CD8-positive, alpha-beta T cell (primary cell): ENCODE measurements at regions of chr7 and their contacts with region 1.

Region 1: GRCh38 chr7:94087664-94088352 is 83.7 kb upstream of the BET1 start:
- DNase-seq: peak in 8 of 9 experiments; percentile 10 to 78 (median 38)
- ATAC-seq: peak; percentile 84
- H3K4me3 ChIP-seq: peak overlapping the region; percentile 24 to 27
- H3K4me3 Mint-ChIP-seq: peak overlapping the region; percentile 61
- H3K27ac ChIP-seq: no peak overlapping the region
- H3K27ac Mint-ChIP-seq: peak overlapping the region; percentile 25
- H3K4me1 ChIP-seq: peaks cover 5% of the 10 kb centered on the region
- H3K4me1 Mint-ChIP-seq: peaks cover 5% of the 10 kb centered on the region
- H3K27me3 ChIP-seq: no peaks in the 10 kb centered on the region
- H3K27me3 Mint-ChIP-seq: peaks cover 12% of the 10 kb centered on the region
- CTCF ChIP-seq: peak; percentile 71

Region 2: DNA sequence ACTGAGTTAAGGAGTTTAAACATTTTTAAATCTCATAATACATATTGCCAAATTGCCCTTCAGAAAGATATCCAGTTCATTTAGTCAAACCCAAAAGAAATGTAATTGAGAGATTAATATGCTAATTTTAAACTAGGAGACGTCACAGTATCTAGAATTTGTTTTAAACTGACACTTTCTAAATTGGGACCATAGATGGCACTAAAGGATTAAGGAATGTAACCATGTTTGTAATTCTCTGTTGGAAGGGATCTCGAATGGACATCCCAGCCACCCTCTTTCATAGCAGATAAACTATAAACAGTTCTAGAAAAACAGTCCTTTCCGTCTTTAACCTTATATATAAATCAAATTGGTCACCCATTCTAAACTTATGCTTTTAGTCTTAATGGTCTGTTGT is 909.6 kb before region 1 on chr7:
- CTCF ChIA-PET with region 1: no interaction called
- POLR2A ChIA-PET with region 1: no interaction called
- intact Hi-C with region 1: loop called in 1 of 2 experiments (anchors 10 kb)
- DNase-seq: peak in 2 of 9 experiments; percentile 3 to 15
- ATAC-seq: no peak
- H3K4me3 ChIP-seq: no peak overlapping the region
- H3K4me3 Mint-ChIP-seq: no peak overlapping the region
- H3K27ac ChIP-seq: no peak overlapping the region
- H3K27ac Mint-ChIP-seq: no peak overlapping the region
- H3K4me1 ChIP-seq: no peaks in the 10 kb centered on the region
- H3K4me1 Mint-ChIP-seq: no peaks in the 10 kb centered on the region
- H3K27me3 ChIP-seq: no peaks in the 10 kb centered on the region
- H3K27me3 Mint-ChIP-seq: peaks cover 16% of the 10 kb centered on the region
- CTCF ChIP-seq: no peak

Region 3: DNA sequence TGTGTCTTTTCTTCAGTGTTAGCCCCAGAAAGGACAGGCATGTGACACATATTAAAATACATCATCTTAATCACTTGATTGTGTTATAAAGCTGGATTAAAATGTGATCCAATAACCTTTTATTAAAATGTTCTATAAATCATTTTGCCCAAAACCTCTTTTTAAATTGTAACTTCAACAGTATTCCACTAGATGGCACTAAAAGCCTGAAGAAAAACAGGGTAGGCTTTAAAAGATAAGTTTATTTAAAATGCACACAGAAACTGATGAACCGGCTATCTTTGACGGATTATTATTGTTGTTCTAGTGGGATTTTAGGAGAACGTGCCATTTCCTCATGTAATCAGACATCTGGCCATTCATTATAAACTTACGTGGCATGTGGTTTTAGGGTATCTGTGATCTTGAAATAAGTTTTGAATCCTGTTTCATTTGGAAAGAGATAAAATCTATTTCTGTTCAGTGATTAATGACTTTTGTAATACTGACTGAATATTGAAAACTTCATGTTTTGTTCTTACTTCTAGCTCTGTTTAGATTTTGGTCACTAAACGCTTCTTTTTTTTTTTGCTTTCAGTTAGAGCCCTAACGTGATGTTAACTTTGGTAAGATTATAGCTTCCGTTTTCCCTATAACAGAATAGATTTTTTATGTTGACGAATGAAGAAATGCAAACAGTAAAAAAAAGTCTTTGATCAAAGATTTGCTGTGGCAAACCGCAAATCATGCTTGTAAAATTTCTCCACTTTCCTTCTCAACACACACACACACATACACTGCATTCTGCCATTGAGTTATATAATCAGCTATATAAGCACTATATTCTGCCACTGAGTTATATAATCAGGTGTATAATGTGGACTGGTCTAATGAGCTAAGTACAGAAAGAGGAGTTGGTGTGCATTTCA is 842.0 kb before region 1 on chr7:
- CTCF ChIA-PET with region 1: interaction called, 11 read pairs
- POLR2A ChIA-PET with region 1: no interaction called
- intact Hi-C with region 1: loop called (anchors 1 to 2 kb)
- DNase-seq: peak in 2 of 9 experiments; percentile 42 to 56
- ATAC-seq: peak; percentile 72
- H3K4me3 ChIP-seq: peak overlapping the region in 1 of 2 experiments; percentile 6
- H3K4me3 Mint-ChIP-seq: peak overlapping the region; percentile 72
- H3K27ac ChIP-seq: no peak overlapping the region
- H3K27ac Mint-ChIP-seq: no peak overlapping the region
- H3K4me1 ChIP-seq: no peaks in the 10 kb centered on the region
- H3K4me1 Mint-ChIP-seq: peaks cover 14% of the 10 kb centered on the region
- H3K27me3 ChIP-seq: no peaks in the 10 kb centered on the region
- H3K27me3 Mint-ChIP-seq: no peaks in the 10 kb centered on the region
- CTCF ChIP-seq: peak; percentile 84

Region 4: DNA sequence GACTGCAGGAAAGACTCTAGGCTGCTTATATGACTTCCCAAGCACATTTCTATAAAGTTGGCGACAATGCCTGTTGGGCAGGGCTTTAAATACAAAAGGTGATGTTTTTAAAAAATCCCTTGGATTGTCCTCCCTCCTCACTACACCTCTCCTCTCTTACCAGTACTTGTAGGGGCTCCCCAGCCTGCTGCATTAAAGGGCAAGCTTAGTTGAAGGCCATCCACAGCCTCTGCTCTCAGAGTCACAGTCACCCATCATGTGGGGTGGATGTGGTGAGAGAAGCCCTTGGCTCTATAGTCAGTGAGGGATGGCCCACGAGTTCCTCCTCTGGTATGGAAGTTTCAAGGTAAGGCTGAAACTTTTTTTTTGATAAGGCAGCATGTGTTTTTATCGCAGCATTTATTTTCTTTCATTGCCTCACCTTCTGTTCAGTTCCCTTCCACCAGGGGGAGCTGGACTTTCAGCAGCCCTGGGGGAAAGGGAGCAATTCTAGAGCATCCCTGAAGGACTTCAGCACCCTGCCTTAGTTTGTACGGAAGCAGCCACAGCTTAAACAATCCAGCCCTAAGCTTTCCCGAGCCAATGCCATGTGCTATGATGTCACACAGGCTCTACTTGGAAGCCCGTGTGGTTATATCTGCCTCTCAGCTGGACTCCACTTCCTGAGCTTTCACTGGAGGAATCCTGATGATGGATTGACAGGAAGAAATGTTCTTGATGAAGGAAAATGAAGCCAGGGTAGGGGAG is 645.2 kb before region 1 on chr7:
- CTCF ChIA-PET with region 1: interaction called, 4 read pairs
- POLR2A ChIA-PET with region 1: no interaction called
- intact Hi-C with region 1: loop called in 1 of 2 experiments (anchors 10 kb)
- DNase-seq: peak in 6 of 9 experiments; percentile 9 to 45 (median 25)
- ATAC-seq: peak; percentile 54
- H3K4me3 ChIP-seq: no peak overlapping the region
- H3K4me3 Mint-ChIP-seq: no peak overlapping the region
- H3K27ac ChIP-seq: no peak overlapping the region
- H3K27ac Mint-ChIP-seq: no peak overlapping the region
- H3K4me1 ChIP-seq: no peaks in the 10 kb centered on the region
- H3K4me1 Mint-ChIP-seq: no peaks in the 10 kb centered on the region
- H3K27me3 ChIP-seq: no peaks in the 10 kb centered on the region
- H3K27me3 Mint-ChIP-seq: no peaks in the 10 kb centered on the region
- CTCF ChIP-seq: peak; percentile 52

Region 5: GRCh38 chr7:93949461-93949860 is 138.3 kb before region 1 on chr7:
- CTCF ChIA-PET with region 1: no interaction called
- POLR2A ChIA-PET with region 1: no interaction called
- intact Hi-C with region 1: loop called in 1 of 2 experiments (anchors 10 kb)
- DNase-seq: no peak
- ATAC-seq: no peak
- H3K4me3 ChIP-seq: no peak overlapping the region
- H3K4me3 Mint-ChIP-seq: no peak overlapping the region
- H3K27ac ChIP-seq: no peak overlapping the region
- H3K27ac Mint-ChIP-seq: no peak overlapping the region
- H3K4me1 ChIP-seq: no peaks in the 10 kb centered on the region
- H3K4me1 Mint-ChIP-seq: no peaks in the 10 kb centered on the region
- H3K27me3 ChIP-seq: no peaks in the 10 kb centered on the region
- H3K27me3 Mint-ChIP-seq: no peaks in the 10 kb centered on the region
- CTCF ChIP-seq: no peak